Head of caudate nucleus (tissue), 42 donors: ENCODE measurements at regions of chr3 and their contacts with region 1.

Region 1: DNA sequence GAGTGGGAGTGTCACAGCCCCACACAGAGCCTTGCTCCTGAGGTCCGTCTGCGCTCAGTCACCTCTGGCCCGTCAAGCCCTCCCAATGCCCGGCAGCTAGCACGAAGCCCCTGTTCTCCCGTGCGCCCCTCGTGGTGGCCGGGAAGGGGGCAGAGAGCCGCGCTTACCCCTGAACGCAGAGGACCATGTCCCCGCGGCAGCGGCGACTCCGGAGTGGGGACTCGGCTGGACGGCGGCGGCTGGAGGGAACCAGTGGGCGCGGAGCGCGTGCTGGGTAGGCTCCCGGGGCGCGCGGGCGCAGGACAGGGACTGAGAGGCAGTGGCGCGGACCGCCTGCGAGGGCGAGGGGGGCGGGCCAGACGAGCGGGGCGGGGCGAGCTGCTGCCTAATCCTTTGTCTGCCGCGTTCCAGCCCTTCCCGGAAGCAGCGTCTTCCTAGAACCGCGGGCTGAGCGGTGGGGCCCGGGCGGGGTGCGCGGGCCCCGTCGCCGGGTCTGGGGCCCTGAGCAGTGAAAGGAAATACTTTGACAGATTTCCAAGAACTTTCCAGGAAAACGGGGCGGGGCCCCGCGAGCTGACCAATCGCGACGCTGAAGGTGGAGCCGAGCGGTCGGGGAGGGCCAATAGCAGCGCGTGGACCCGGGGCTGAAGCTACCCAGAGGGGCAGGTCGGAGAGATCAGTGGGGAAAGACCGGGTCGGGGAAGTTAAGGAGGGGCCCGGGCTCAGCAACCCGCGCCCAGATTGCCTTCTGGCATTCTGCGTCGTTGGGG is at the start of gene CISH:
- DNase-seq: peak; percentile 67 to 94 (median 85)

Region 2: GRCh38 chr3:50519471-50520089 is 92.1 kb before region 1 on chr3:
- intact Hi-C with region 1: no loop called
- DNase-seq: peak; percentile 49 to 89 (median 76)

Region 3: DNA sequence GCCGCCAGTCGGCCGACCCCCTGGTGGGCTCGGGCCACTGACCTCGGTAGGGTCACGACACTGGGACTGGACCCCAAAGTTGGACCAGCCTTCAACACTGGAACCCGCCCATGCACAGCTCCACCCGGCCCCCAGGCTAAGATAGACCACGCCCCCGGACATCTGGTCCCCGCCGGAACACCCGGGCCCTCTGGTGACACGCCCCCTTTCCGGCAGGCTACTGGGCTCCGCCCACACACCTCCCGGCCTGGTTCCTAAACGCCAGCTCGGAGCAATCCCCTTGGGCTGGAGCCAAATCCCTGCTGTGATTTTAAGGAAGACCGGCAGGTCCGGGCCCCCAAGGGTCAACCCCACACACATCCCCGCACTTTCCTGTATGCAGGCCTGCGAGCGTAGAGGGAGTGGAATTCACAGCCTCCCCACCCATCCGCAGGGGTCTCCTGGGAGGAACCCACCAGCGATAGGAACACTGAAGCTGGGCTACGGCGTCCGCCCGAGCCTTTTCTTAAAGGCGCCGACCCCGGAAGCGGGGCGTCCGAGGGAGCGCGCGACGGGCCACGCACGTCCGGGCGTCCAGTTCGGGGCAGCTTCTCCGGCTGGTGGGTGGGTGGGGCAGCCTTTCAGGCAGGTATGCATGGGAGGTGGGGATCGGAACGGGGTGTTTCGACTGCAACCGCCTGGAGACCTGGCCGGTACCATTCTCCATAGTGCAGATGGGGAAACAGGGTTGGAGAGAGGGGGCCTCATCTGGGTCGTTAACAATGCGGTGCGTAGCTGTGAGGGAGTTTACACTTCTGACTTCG is 42.5 kb before region 1 on chr3 and contains the start of gene HEMK1:
- intact Hi-C with region 1: loop called (anchors 5 kb)
- DNase-seq: peak; percentile 92 to 99 (median 96)

Region 4: DNA sequence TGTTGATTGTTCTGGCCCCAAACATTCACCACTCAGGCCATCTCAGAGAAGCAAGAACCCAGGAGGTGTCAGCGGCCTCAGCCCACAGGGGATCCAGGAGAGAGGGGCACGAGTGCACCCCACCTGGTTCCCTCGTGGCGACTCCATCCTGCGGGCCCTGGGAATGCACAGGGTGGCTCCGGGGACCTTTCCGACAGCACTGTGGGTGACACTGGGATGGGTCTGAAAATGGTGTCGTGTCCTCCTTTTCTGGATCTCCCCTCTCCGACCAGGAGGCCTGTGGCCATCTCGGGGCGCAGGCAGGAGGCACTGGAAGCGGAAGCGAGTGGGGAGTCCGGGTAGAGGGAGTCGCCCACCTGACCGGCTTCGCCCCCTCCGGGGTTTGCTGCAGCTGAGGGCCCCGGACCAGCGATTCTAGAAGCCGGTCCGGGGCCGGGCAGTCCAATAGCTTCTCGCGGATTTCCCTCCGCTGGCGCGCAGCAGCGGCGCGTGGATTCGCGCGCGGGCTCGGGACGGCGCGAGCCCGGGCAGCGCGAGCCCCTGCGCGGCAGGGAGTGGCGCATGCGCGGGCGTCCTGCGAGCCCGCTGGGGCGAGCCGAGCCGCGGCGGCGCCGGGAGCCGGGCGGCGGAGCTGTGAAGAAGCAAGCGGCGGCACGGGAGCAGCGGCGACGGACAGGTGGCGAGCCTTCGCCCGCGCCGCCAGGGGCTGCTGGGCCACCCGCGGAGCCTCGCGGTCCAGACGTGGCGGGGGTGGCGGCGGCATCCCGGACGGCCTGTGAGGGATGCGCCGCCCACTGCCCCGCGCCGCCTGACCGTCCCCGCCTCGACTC is 62.9 kb after region 1 on chr3 and contains the start of gene DOCK3:
- intact Hi-C with region 1: loop called (anchors 5 kb)
- DNase-seq: peak in 39 of 42 donors; percentile 27 to 83 (median 65)

Region 5: DNA sequence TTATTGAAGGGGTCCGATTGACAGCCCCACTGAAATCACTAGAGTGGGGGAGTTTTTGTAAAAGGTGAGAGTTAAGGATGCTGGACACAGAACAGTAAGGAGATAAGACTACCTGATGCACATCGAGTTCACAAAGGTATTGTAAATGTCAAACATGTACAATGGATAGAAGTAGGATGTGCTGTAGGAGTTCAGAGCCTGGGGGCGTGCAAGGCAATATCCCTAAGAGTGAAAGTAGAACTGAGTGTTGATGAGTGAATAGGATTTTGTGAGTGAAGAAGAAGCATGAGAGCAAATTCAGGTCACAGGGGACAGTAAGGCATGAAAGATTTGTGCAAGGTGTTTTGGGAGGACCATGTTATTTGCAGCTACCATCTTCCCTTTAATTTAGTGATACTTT is 84.6 kb after region 1 on chr3:
- intact Hi-C with region 1: no loop called
- DNase-seq: peak in 17 of 42 donors; percentile 12 to 70 (median 35)

Region 6: DNA sequence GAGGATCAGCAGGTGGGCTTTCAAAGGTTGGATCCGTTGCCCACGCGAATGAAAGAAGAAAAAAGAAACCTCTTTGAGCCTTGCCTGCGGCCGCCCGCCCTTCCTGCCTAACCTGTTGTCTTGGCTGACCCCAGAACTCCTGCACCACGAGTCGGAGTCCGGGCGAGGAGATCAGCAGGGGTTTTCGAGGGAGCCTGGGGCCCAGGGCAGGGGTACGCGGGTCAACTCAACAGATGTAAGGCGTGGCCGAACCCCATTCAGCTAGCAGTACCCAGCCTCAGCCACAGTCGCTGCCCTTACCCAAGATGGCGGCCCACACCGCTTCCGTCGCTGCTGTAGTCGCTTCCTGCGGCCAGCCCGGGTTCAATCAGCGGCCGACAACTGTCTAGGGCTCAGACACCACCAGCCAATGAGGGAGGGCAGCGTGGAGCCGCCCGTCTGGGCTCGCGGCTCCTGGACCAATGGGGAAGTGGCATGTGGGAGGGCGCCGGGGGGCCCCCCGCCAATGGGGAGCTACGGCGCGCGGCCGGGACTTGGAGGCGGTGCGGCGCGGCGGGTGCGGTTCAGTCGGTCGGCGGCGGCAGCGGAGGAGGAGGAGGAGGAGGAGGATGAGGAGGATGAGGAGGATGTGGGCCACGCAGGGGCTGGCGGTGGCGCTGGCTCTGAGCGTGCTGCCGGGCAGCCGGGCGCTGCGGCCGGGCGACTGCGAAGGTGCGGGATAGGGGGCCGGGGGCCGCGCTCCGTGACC is 773.3 kb after region 1 on chr3 and contains the start of gene MANF:
- intact Hi-C with region 1: loop called (anchors 5 kb)
- DNase-seq: peak; percentile 94 to 99 (median 98)